Activated B cell treated with CpG ODN at 0.5 μM for 24 hours (primary cell): ENCODE measurements at regions of chr6 and their contacts with region 1.

Region 1: GRCh38 chr6:41941280-41942066 is at the start of gene CCND3:
- DNase-seq: peak; percentile 85
- ATAC-seq: peak; percentile 92
- H3K4me3 Mint-ChIP-seq: peak within 1 kb of the TSS; percentile 90
- H3K27ac Mint-ChIP-seq: peak within 1 kb of the TSS; percentile 89
- H3K4me1 Mint-ChIP-seq: peaks cover 53% of the 10 kb centered on the region
- H3K27me3 Mint-ChIP-seq: no peaks in the 10 kb centered on the region
- CTCF ChIP-seq: no peak
- total RNA-seq, gene CCND3: 70.7 and 75.2 TPM in 2 replicates

Region 2: DNA sequence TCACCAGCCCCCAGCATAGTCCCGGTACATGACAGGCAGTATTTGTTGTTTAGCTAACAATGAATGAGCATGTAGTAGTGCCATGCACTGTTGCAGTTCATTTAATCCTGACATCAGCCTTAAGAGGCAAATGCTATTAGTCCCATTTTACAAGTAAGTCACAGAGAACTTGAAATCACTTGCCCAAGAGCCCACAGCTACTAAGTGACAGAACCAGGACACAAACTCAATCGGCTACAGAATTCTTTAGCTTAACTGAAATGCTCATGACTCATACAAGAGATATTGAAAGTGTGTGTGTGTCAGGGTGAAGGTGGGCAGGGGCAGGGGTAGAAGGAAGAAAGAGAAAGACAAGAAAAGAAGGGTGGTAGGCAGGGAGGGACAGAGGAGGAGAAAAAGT is 955.1 kb before region 1 on chr6:
- CTCF ChIA-PET with region 1: no interaction called
- POLR2A ChIA-PET with region 1: no interaction called
- intact Hi-C with region 1: no loop called
- DNase-seq: no peak
- ATAC-seq: no peak
- H3K4me3 Mint-ChIP-seq: no peak overlapping the region
- H3K27ac Mint-ChIP-seq: no peak overlapping the region
- H3K4me1 Mint-ChIP-seq: no peaks in the 10 kb centered on the region
- H3K27me3 Mint-ChIP-seq: peaks cover 28% of the 10 kb centered on the region
- CTCF ChIP-seq: no peak

Region 3: GRCh38 chr6:41505122-41506049 is 436.1 kb before region 1 on chr6:
- CTCF ChIA-PET with region 1: no interaction called
- POLR2A ChIA-PET with region 1: interaction called, 10 read pairs
- intact Hi-C with region 1: no loop called
- DNase-seq: peak; percentile 66
- ATAC-seq: peak; percentile 86
- H3K4me3 Mint-ChIP-seq: peak overlapping the region; percentile 81
- H3K27ac Mint-ChIP-seq: peak overlapping the region; percentile 92
- H3K4me1 Mint-ChIP-seq: peaks cover 43% of the 10 kb centered on the region
- H3K27me3 Mint-ChIP-seq: no peaks in the 10 kb centered on the region
- CTCF ChIP-seq: no peak

Region 4: DNA sequence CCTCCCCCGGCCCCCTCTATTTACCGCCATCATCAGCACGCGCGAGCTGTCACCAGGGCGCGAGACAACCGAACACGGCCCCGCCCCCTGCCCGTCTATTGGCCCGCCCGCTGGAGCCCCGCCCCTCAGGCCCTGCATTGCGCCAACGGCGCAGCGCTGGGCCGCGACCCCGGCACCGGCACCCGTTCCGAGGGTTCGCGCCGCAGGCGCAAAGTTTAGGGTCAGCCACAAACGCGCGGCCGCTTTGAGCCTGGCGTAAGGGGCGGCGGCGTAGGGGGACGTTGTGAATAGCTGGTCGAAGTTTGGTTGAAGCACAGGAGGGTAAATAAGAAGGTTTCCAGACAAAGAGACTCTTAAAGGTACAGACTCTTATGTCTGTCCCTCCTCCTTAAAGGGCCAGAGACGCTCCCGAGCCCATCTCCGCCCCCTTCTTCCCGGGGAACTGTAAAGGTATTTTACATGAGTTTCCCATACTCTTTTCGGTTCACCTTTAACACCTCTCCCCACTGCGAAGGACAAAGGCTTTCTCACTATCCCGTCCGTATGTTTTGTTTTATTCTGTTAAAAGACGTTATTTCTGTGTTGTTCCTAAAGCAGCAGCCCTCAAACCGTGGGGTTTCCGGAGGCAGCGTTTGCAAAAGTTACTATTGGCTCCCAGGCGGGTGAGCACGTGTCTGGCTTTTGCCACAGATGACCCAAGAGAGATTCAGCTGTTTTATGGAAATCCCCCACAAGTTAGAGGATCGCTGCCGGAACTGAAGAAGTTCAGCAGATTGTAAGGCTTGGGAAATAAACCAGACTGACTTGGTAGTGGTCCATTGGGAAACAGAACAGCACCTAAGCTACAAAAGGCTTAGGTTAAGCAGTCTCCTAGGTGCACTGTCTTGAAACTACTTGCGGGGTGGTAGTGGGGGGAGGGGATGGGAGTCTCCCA is 45.9 kb before region 1 on chr6 and contains the start of gene USP49:
- CTCF ChIA-PET with region 1: interaction called, 3 read pairs
- POLR2A ChIA-PET with region 1: interaction called, 12 read pairs
- intact Hi-C with region 1: loop called (anchors 1 kb)
- DNase-seq: peak; percentile 90
- ATAC-seq: peak; percentile 92
- H3K4me3 Mint-ChIP-seq: no peak within 1 kb of the TSS
- H3K27ac Mint-ChIP-seq: peak within 1 kb of the TSS; percentile 95
- H3K4me1 Mint-ChIP-seq: peaks cover 14% of the 10 kb centered on the region
- H3K27me3 Mint-ChIP-seq: no peaks in the 10 kb centered on the region
- CTCF ChIP-seq: no peak
- total RNA-seq, gene USP49: 7.7 and 8.0 TPM in 2 replicates

Region 5: DNA sequence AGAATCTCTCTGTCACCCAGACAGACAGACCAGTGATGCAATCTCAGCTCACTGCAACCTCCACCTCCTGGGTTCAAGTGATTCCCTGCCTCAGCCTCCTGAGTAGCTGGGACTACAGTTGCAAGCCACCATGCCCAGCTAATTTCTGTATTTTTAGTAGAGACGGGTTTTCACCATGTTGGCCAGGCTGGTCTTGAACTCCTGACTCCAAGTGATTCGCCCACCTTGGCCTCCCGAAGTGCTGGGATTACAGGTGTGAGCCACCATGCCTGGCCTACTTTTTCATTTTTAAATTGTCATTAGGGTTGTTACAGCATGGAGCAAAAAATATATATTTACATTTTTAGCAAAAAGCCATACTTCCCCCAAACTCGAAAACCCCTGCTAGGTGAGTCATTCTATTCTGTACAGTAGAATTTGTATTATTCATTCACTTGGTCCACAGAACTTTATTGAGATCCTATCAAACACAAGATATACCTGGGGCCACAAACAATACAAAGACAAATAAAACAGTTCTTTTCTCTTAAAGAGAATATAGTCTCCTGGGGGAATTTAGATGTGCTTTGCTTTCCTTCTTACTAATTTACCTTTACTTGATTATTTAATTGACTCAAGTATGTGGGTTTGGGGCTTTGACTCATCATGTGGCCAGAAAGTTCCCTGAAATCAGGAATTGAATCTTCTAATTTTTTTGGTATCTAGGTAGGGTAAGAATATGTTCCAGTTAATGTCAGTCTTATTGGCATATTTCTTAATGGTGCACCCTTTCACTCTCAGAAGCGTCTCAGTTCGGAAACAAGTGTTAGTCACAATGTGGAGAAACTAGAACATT is 16.8 kb after region 1 on chr6:
- CTCF ChIA-PET with region 1: no interaction called
- POLR2A ChIA-PET with region 1: interaction called, 9 read pairs
- intact Hi-C with region 1: loop called (anchors 1 kb)
- DNase-seq: no peak
- ATAC-seq: peak; percentile 81
- H3K4me3 Mint-ChIP-seq: peak overlapping the region; percentile 2
- H3K27ac Mint-ChIP-seq: peak overlapping the region; percentile 66
- H3K4me1 Mint-ChIP-seq: peaks cover 31% of the 10 kb centered on the region
- H3K27me3 Mint-ChIP-seq: no peaks in the 10 kb centered on the region
- CTCF ChIP-seq: no peak

Region 6: DNA sequence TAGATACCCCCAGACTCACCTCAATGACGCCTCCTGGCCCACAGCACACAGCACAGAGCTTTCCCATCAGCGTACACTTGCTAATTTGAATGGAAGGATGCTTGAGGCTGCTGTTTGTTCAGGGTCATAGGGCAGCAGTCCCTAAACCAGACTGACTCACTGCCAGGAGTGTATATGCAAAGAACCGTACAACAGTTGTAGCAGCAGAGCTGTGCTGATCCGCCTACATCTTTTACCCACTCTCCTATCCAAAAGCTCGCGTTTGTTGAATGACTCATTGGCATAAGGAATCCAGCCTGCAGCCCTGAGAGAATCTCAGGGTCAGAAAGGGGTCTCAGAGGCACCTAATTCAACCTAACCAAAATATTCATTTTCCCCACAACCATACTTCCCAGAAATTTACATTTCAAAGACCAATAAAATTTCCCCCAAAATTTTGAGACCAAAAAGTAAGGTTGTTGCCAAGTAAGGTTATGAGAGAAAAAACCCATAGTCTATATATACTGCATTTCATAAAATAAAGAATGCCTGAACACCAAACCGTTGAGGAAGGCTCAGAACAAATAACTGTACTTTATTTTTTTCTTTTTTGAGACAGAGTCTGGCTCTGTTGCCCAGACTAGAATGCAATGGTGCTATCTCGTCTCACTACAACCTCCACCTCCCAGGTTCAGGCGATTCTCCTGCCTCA is 35.5 kb after region 1 on chr6:
- CTCF ChIA-PET with region 1: interaction called, 6 read pairs
- POLR2A ChIA-PET with region 1: interaction called, 5 read pairs
- intact Hi-C with region 1: loop called (anchors 5 kb)
- DNase-seq: no peak
- ATAC-seq: peak; percentile 76
- H3K4me3 Mint-ChIP-seq: peak overlapping the region; percentile 47
- H3K27ac Mint-ChIP-seq: peak overlapping the region; percentile 85
- H3K4me1 Mint-ChIP-seq: peaks cover 72% of the 10 kb centered on the region
- H3K27me3 Mint-ChIP-seq: no peaks in the 10 kb centered on the region
- CTCF ChIP-seq: no peak

Region 7: GRCh38 chr6:42021847-42022754 is 80.6 kb after region 1 on chr6:
- CTCF ChIA-PET with region 1: interaction called, 7 read pairs
- POLR2A ChIA-PET with region 1: interaction called, 14 read pairs
- intact Hi-C with region 1: loop called (anchors 1 kb)
- DNase-seq: peak; percentile 58
- ATAC-seq: peak; percentile 38
- H3K4me3 Mint-ChIP-seq: peak overlapping the region; percentile 75
- H3K27ac Mint-ChIP-seq: peak overlapping the region; percentile 99
- H3K4me1 Mint-ChIP-seq: peaks cover 83% of the 10 kb centered on the region
- H3K27me3 Mint-ChIP-seq: no peaks in the 10 kb centered on the region
- CTCF ChIP-seq: no peak

Region 8: GRCh38 chr6:42038811-42039408 is 97.4 kb after region 1 on chr6:
- CTCF ChIA-PET with region 1: interaction called, 90 read pairs
- POLR2A ChIA-PET with region 1: interaction called, 195 read pairs
- intact Hi-C with region 1: loop called (anchors 1 kb)
- DNase-seq: no peak
- ATAC-seq: no peak
- H3K4me3 Mint-ChIP-seq: peak overlapping the region; percentile 70
- H3K27ac Mint-ChIP-seq: peak overlapping the region; percentile 92
- H3K4me1 Mint-ChIP-seq: peaks cover 59% of the 10 kb centered on the region
- H3K27me3 Mint-ChIP-seq: no peaks in the 10 kb centered on the region
- CTCF ChIP-seq: no peak